ENCODE measurements at regions of chr12 and their contacts with region 1.

Region 1: DNA sequence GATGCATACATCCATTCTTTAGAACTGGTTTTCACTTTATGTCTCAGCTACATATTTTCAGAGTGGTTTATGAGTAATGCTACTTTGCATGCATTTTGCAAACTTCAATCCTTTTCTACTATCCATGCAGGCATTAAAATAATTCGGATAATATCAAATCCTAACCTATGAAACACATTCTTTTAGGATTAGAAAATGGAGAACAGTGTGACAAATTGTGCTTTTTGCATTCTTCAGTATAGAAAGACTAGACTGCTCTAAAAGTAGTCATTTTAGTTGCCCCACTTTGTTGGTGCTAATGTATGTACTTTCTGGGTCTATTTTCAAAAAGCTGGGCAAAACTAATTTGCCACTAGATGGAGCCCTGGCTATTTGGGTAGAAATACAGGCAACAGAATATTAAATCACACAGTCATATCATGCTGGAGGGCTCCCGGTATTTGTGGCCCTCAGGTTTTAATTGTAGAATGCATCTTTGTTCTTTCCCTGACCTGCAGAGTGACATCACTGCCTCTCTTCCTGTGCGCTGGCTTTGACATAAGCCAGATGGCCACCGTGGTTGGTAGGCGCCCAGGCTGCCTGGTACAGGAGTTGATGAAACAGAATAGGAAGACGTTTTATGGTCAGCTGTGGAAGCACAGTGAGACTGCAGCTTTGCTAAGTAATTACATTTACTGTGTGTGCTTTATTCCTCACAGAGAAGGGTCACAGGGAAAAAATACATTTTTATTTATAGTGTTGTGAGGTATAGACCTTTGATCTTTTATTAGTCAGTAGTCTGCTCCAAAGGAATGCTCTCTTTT is 28.1 kb downstream of the MSRB3 start:
- DNase-seq: peak in 1 of 2 experiments; percentile 52
- H3K4me3 ChIP-seq: peak overlapping the region; percentile 12; the same call in 1 of the 2 replicates
- H3K4me3 Mint-ChIP-seq: peak overlapping the region; percentile 67
- H3K27ac Mint-ChIP-seq: peak overlapping the region; percentile 55
- H3K4me1 ChIP-seq: peaks cover 5% of the 10 kb centered on the region
- H3K4me1 Mint-ChIP-seq: peaks cover 10% of the 10 kb centered on the region
- H3K27me3 ChIP-seq: no peaks in the 10 kb centered on the region
- H3K27me3 Mint-ChIP-seq: no peaks in the 10 kb centered on the region
- CTCF ChIP-seq: peak; percentile 53 to 75

Region 2: GRCh38 chr12:65106948-65107347 is 199.6 kb before region 1 on chr12:
- CTCF ChIA-PET with region 1: no interaction called
- POLR2A ChIA-PET with region 1: no interaction called
- intact Hi-C with region 1: no loop called
- DNase-seq: no peak
- H3K4me3 ChIP-seq: no peak overlapping the region
- H3K4me3 Mint-ChIP-seq: no peak overlapping the region
- H3K27ac Mint-ChIP-seq: no peak overlapping the region
- H3K4me1 ChIP-seq: no peaks in the 10 kb centered on the region
- H3K4me1 Mint-ChIP-seq: no peaks in the 10 kb centered on the region
- H3K27me3 ChIP-seq: no peaks in the 10 kb centered on the region
- H3K27me3 Mint-ChIP-seq: no peaks in the 10 kb centered on the region
- CTCF ChIP-seq: peak; percentile 28 to 31

Region 3: DNA sequence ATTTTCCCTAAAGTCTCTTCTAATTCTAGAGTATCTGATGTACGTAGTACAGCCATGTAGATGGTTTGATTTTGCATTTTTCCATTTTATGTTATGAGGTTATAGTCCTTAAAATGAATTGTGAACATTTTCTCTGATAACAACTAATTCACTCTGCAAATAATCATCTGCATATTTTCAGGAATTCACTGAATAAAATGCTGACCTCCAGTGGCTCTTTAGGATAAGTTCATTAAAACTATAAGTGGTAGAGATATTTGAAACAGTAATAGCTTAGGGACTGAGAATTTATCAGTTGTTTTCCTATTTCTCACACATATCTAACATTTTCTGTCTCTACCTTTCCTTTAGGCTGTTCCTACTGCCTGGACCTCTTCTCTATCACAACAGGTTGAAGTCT is 23.7 kb before region 1 on chr12:
- CTCF ChIA-PET with region 1: no interaction called
- POLR2A ChIA-PET with region 1: no interaction called
- intact Hi-C with region 1: no loop called
- DNase-seq: no peak
- H3K4me3 ChIP-seq: no peak overlapping the region
- H3K4me3 Mint-ChIP-seq: no peak overlapping the region
- H3K27ac Mint-ChIP-seq: no peak overlapping the region
- H3K4me1 ChIP-seq: no peaks in the 10 kb centered on the region
- H3K4me1 Mint-ChIP-seq: no peaks in the 10 kb centered on the region
- H3K27me3 ChIP-seq: no peaks in the 10 kb centered on the region
- H3K27me3 Mint-ChIP-seq: no peaks in the 10 kb centered on the region
- CTCF ChIP-seq: no peak

Region 4: DNA sequence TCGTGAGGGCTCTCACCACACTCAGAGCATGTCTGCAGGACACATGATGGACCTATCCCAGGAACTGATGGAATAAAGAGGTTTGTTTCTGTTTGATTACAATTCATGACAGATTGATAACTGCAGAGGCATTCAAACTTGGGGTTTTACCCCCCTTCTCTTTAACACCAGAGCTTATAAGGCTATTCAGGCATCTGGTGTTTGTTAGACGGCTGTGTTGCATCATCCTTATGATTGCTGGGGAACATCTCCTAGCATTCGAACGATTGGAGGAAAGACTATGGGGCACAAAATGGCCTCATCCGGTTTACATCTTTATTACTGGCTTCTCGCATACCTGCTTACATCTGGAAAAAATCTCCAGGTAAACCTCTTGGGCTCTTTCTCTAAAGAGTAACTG is 163.7 kb after region 1 on chr12:
- CTCF ChIA-PET with region 1: no interaction called
- POLR2A ChIA-PET with region 1: no interaction called
- intact Hi-C with region 1: loop called (anchors 10 kb)
- DNase-seq: no peak
- H3K4me3 ChIP-seq: no peak overlapping the region
- H3K4me3 Mint-ChIP-seq: no peak overlapping the region
- H3K27ac Mint-ChIP-seq: no peak overlapping the region
- H3K4me1 ChIP-seq: no peaks in the 10 kb centered on the region
- H3K4me1 Mint-ChIP-seq: no peaks in the 10 kb centered on the region
- H3K27me3 ChIP-seq: no peaks in the 10 kb centered on the region
- H3K27me3 Mint-ChIP-seq: no peaks in the 10 kb centered on the region
- CTCF ChIP-seq: no peak

Region 5: DNA sequence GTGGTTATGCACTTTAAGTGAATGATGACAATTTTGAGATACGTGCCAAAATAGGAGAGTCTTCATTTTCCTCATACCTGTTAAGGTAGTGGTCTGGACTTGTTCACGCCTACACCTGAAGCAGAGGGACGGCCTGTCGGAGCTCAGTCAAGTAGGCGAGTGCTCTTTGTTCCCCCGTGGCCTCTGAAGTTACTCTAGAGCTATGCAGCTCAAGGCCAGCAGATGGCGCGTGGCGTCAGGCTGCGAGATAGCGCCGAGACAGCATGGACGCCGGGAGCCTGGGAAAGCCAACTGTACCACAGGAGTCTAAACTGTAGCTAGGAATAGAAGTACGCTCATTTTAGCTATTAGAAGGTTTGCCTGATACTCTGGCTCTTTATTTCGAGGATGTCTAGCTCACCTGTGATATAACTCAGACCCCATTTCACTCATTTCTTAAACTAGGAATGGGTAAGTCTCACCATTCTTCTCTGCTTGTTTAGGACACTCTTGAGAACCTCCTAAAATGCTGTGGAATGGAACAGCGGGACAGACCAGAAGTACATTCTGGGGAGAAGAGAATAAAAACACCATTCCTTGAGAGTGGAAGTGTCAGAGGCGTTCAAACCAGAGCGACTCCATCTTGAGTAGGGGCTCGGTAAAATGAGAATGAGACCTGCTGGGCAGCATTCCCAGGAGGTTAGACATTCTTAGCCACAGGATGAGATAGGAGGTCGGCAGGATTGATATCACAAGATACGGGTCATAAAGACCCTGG is 250.3 kb after region 1 on chr12:
- CTCF ChIA-PET with region 1: no interaction called
- POLR2A ChIA-PET with region 1: no interaction called
- intact Hi-C with region 1: loop called (anchors 2 kb)
- DNase-seq: peak; percentile 80 to 82
- H3K4me3 ChIP-seq: no peak overlapping the region
- H3K4me3 Mint-ChIP-seq: no peak overlapping the region
- H3K27ac Mint-ChIP-seq: no peak overlapping the region
- H3K4me1 ChIP-seq: peaks cover 9% of the 10 kb centered on the region
- H3K4me1 Mint-ChIP-seq: no peaks in the 10 kb centered on the region
- H3K27me3 ChIP-seq: no peaks in the 10 kb centered on the region
- H3K27me3 Mint-ChIP-seq: no peaks in the 10 kb centered on the region
- CTCF ChIP-seq: peak; percentile 81 to 85

Region 6: DNA sequence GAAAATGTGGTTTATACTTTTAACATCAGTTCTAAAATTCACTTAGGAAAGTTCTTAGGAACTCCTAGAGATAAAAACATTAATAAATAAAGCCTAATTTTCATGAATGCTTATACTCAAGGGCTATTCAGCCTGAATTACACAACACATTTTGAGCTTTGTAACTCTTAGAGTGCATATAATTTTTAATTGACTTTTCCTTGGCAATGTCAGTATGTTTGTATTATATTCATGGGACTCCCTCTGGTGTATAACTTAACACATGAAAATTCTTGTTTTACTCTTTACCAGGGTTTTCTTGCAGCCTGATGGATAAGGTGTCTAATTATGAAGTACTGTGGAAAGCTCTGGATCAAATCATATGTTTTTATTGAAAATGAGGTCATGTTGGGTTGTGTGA is 367.2 kb after region 1 on chr12:
- CTCF ChIA-PET with region 1: no interaction called
- POLR2A ChIA-PET with region 1: no interaction called
- intact Hi-C with region 1: loop called (anchors 2 kb)
- DNase-seq: no peak
- H3K4me3 ChIP-seq: no peak overlapping the region
- H3K4me3 Mint-ChIP-seq: no peak overlapping the region
- H3K27ac Mint-ChIP-seq: no peak overlapping the region
- H3K4me1 ChIP-seq: no peaks in the 10 kb centered on the region
- H3K4me1 Mint-ChIP-seq: no peaks in the 10 kb centered on the region
- H3K27me3 ChIP-seq: no peaks in the 10 kb centered on the region
- H3K27me3 Mint-ChIP-seq: no peaks in the 10 kb centered on the region
- CTCF ChIP-seq: no peak

Measured in Caco-2 (cell line).